Activated T-helper 2 cell treated with anti-CD3 and anti-CD28 coated beads, Interferon-gamma antibody, Interleukin-2, Interleukin-4, amounts not matched to agents 10 μg/mL and 5 μg/mL and 100 μg/mL, durations not matched to agents 14 hours and 24 hours and 36 hours (primary cell): ENCODE measurements at regions of chr2 and their contacts with region 1.

Region 1: DNA sequence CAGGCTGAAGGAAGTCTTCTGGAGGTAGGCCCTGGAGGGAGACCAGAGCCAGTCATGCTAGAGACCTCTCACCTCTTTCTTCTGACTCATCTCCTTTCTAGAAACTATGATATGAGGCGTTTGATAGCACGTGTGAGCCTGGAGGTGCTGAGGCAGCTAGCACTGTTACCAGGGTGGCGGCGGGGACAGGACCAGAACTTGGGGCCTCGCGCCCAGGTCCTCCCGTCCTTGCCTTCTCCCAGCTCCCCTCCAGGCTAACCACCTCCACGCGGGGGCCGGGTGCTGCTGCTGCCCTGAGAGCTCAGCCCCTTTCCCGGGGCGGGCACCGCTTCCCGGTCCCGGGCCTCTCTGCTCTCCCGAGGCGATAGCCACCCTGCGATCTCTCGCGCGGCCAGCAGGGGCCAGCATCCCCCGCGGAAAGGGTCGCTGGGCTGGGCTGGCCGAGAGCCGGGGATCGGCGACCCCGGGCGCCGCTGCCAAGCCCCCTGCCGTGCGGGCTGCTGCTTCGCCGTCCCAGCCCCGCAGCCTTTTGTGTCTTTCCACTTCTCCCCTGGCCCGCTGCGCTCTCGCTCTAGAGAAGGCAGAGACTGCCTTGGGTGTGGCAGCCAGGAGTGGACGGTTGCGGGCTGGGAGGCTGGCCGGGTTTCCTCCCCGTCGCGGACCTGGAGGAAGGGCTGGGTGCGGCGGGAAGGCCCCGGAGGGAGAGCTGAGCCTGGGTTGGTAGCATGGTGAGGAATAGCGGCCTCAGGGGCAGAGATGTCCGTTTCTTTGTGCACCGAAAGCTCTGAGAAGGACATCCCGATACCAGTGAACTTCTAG is 49.1 kb downstream of the TMEM17 start:
- DNase-seq: peak; percentile 41
- H3K4me3 Mint-ChIP-seq: no peak overlapping the region
- H3K27ac Mint-ChIP-seq: no peak overlapping the region
- H3K4me1 Mint-ChIP-seq: peaks cover 4% of the 10 kb centered on the region
- H3K27me3 Mint-ChIP-seq: peaks cover 7% of the 10 kb centered on the region

Region 2: DNA sequence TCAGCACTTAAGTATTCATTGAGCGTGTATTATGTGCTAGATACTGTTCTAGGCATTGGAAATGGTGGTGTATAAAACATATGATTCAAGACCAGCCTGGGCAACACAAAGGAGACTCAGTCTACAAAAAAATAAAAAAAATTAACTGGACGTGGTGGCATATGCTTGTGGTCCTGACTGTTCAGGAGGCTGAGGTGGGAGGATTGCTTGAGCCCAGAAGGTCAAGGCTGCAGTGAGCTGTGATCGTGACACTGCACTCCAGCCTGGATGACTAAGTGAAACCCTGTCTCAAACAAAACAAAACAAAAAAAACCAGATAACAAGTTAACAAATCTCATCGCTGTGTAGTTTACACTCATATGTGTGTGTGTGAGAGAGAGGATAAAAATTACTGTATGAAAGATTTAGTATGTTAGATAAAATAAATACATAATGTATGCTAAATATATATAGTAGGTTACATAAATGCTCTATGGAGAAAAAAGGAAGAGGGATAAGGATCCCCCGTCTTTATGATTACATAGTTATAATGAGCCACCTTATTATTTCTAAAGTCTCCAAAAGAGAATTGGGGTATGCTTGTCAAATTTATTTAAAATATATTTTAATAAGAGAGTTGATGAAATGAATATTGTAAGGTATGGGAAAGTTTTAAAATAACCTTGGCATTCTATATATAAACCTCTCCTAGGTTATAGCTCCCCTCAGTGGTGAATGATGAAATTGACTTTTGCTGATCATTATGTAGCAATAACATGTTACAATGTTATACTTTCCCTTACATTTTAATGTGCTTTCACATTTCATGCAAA is 317.8 kb after region 1 on chr2:
- intact Hi-C with region 1: loop called (anchors 1 kb)
- DNase-seq: no peak
- H3K4me3 Mint-ChIP-seq: no peak overlapping the region
- H3K27ac Mint-ChIP-seq: no peak overlapping the region
- H3K4me1 Mint-ChIP-seq: peaks cover 4% of the 10 kb centered on the region
- H3K27me3 Mint-ChIP-seq: no peaks in the 10 kb centered on the region

Region 3: GRCh38 chr2:63050334-63051041 is 593.6 kb after region 1 on chr2 and contains the start of gene OTX1:
- intact Hi-C with region 1: loop called (anchors 5 kb)
- DNase-seq: no peak
- H3K4me3 Mint-ChIP-seq: peak within 1 kb of the TSS; percentile 80
- H3K27ac Mint-ChIP-seq: peak within 1 kb of the TSS; percentile 45
- H3K4me1 Mint-ChIP-seq: peaks cover 23% of the 10 kb centered on the region
- H3K27me3 Mint-ChIP-seq: peaks cover 81% of the 10 kb centered on the region
- total RNA-seq, gene OTX1: not detected in 2 replicates

Region 4: GRCh38 chr2:63424329-63425078 is 967.6 kb after region 1 on chr2:
- intact Hi-C with region 1: loop called (anchors 10 kb)
- DNase-seq: no peak
- H3K4me3 Mint-ChIP-seq: no peak overlapping the region
- H3K27ac Mint-ChIP-seq: no peak overlapping the region
- H3K4me1 Mint-ChIP-seq: peaks cover 2% of the 10 kb centered on the region
- H3K27me3 Mint-ChIP-seq: no peaks in the 10 kb centered on the region